ENCODE measurements at regions of chr4 and their contacts with region 1.

Region 1: GRCh38 chr4:7021930-7022658 is 21.1 kb upstream of the TADA2B start:
- DNase-seq: peak; percentile 77
- H3K4me3 Mint-ChIP-seq: peak overlapping the region; percentile 30
- H3K27ac Mint-ChIP-seq: peak overlapping the region; percentile 82
- H3K4me1 Mint-ChIP-seq: peaks cover 11% of the 10 kb centered on the region
- H3K27me3 Mint-ChIP-seq: no peaks in the 10 kb centered on the region
- CTCF ChIP-seq: no peak

Region 2: DNA sequence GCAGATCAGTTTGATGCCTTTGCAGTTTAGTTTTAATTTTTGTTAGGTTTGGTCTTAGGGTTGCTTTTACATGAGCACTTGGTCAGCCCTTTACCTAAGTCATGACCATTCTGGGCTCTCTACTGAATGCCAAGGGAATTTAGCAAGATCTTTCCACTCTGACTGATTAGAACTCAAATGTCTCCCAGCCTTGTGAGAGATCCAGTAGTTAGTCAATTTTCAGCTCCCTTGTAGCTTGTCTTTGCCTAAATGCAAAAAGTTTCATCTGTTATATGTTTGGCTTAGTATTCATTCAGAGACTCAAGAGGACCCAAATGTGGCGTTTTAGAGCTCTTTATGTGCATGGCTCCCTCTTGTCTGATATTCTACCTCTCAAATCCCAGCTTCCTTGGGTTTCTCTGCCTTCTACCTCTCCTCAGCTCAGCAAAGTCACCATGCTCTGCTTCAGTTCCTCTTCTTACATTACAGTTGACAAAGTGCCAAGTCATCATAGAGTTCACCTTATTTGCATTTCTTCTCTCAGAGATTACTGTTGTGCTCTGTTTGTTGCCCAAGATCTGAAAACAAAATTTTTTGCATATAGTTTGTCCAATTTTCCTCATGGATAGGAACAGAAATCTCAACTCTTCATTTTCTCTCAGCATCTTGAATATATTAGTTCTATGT is 804.2 kb before region 1 on chr4:
- CTCF ChIA-PET with region 1: no interaction called
- POLR2A ChIA-PET with region 1: no interaction called
- intact Hi-C with region 1: no loop called
- DNase-seq: no peak
- H3K4me3 Mint-ChIP-seq: no peak overlapping the region
- H3K27ac Mint-ChIP-seq: no peak overlapping the region
- H3K4me1 Mint-ChIP-seq: no peaks in the 10 kb centered on the region
- H3K27me3 Mint-ChIP-seq: peaks cover 21% of the 10 kb centered on the region
- CTCF ChIP-seq: no peak

Region 3: DNA sequence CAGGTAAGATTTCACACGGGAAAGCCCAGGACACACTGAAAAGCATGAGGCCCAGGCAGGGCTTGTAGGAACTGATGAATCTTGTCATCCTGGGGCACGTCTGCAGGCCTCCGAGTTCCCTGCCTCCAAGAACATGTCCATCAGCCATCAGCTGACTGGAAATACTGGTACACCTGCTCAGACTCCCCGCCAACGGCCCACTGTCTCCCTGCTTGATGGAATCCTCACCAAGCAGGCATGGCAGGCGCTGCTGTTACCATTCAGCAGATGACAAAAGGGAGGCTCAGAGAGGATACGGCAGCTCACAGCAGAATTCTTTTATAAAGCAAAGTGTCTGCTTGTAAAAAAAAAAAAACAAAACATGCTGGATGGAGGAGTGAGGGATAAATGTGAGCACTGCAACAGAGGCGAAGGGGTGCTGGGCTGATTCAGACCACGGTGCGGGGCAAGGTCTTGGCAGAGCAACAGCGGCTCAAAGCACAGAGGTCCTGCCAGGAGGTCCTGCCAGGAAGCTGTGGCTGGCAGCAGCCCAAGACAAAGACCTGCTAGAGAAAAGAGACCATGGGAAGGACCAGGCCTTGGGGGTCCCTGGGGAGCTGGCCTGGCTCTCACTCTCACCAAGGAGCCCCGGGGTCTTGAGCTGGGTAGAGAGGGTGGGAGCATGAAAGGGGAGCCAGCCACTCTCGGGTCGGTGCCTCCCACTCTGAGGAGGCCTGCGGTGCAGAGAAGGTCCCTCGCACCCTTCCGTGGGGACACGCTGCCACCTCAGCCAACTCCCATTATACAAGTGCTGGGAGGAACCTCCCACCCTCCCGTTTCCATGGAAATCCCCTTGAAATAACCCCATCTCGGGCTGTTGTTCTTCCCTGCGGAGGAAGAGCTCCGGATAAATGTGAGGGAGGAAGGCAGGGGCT is 575.3 kb before region 1 on chr4:
- CTCF ChIA-PET with region 1: no interaction called
- POLR2A ChIA-PET with region 1: no interaction called
- intact Hi-C with region 1: no loop called
- DNase-seq: no peak
- H3K4me3 Mint-ChIP-seq: no peak overlapping the region
- H3K27ac Mint-ChIP-seq: no peak overlapping the region
- H3K4me1 Mint-ChIP-seq: no peaks in the 10 kb centered on the region
- H3K27me3 Mint-ChIP-seq: no peaks in the 10 kb centered on the region
- CTCF ChIP-seq: no peak

Region 4: GRCh38 chr4:6963139-6963611 is 58.9 kb before region 1 on chr4:
- CTCF ChIA-PET with region 1: no interaction called
- POLR2A ChIA-PET with region 1: no interaction called
- intact Hi-C with region 1: no loop called
- DNase-seq: no peak
- H3K4me3 Mint-ChIP-seq: no peak overlapping the region
- H3K27ac Mint-ChIP-seq: no peak overlapping the region
- H3K4me1 Mint-ChIP-seq: peaks cover 5% of the 10 kb centered on the region
- H3K27me3 Mint-ChIP-seq: no peaks in the 10 kb centered on the region
- CTCF ChIP-seq: no peak

Region 5: GRCh38 chr4:6999172-7000055 is 22.7 kb before region 1 on chr4:
- CTCF ChIA-PET with region 1: interaction called, 4 read pairs
- POLR2A ChIA-PET with region 1: interaction called, 41 read pairs
- intact Hi-C with region 1: no loop called
- DNase-seq: peak; percentile 88
- H3K4me3 Mint-ChIP-seq: peak overlapping the region; percentile 29
- H3K27ac Mint-ChIP-seq: peak overlapping the region; percentile 80
- H3K4me1 Mint-ChIP-seq: peaks cover 29% of the 10 kb centered on the region
- H3K27me3 Mint-ChIP-seq: no peaks in the 10 kb centered on the region
- CTCF ChIP-seq: no peak

Region 6: GRCh38 chr4:7007944-7008343 is 14.2 kb before region 1 on chr4:
- CTCF ChIA-PET with region 1: interaction called, 11 read pairs
- POLR2A ChIA-PET with region 1: interaction called, 41 read pairs
- intact Hi-C with region 1: no loop called
- DNase-seq: peak; percentile 66
- H3K4me3 Mint-ChIP-seq: no peak overlapping the region
- H3K27ac Mint-ChIP-seq: peak overlapping the region; percentile 69
- H3K4me1 Mint-ChIP-seq: peaks cover 19% of the 10 kb centered on the region
- H3K27me3 Mint-ChIP-seq: no peaks in the 10 kb centered on the region
- CTCF ChIP-seq: no peak

Measured in MCF 10A (cell line).